BJ (cell line): ENCODE measurements at regions of chr3 and their contacts with region 1.

Region 1: GRCh38 chr3:193040836-193041672 is 123.4 kb upstream of the MB21D2 start:
- DNase-seq: no peak
- H3K4me3 ChIP-seq: no peak overlapping the region
- H3K27me3 ChIP-seq: no peaks in the 10 kb centered on the region
- CTCF ChIP-seq: peak; percentile 52

Region 2: GRCh38 chr3:192825657-192826200 is 215.3 kb before region 1 on chr3:
- CTCF ChIA-PET with region 1: interaction called, 15 read pairs
- POLR2A ChIA-PET with region 1: no interaction called
- DNase-seq: no peak
- H3K4me3 ChIP-seq: no peak overlapping the region
- H3K27me3 ChIP-seq: no peaks in the 10 kb centered on the region
- CTCF ChIP-seq: peak; percentile 21; the same call in 1 of the 2 replicates

Region 3: GRCh38 chr3:192917404-192918274 is 123.4 kb before region 1 on chr3 and contains the start of gene MB21D2:
- CTCF ChIA-PET with region 1: interaction called, 11 read pairs
- POLR2A ChIA-PET with region 1: no interaction called
- DNase-seq: no peak
- H3K4me3 ChIP-seq: peak within 1 kb of the TSS; percentile 79
- H3K27me3 ChIP-seq: no peaks in the 10 kb centered on the region
- CTCF ChIP-seq: no peak
- polyA plus RNA-seq, gene MB21D2: 12.3 and 13.3 TPM in 2 replicates

Region 4: GRCh38 chr3:193052354-193053045 is 11.4 kb after region 1 on chr3:
- CTCF ChIA-PET with region 1: interaction called, 13 read pairs
- POLR2A ChIA-PET with region 1: no interaction called
- DNase-seq: no peak
- H3K4me3 ChIP-seq: no peak overlapping the region
- H3K27me3 ChIP-seq: no peaks in the 10 kb centered on the region
- CTCF ChIP-seq: no peak

Region 5: GRCh38 chr3:193207290-193208273 is 166.5 kb after region 1 on chr3:
- CTCF ChIA-PET with region 1: no interaction called
- POLR2A ChIA-PET with region 1: no interaction called
- DNase-seq: no peak
- H3K4me3 ChIP-seq: no peak overlapping the region
- H3K27me3 ChIP-seq: no peaks in the 10 kb centered on the region
- CTCF ChIP-seq: no peak